ENCODE measurements at regions of chr17 and their contacts with region 1.

Region 1: GRCh38 chr17:45894022-45894784 is at the start of gene MAPT:
- DNase-seq: peak; percentile 91 to 97
- ATAC-seq: peak; percentile 96
- H3K4me3 ChIP-seq: peak within 1 kb of the TSS; percentile 46 to 68
- H3K27ac ChIP-seq: no peak within 1 kb of the TSS
- H3K4me1 ChIP-seq: no peaks in the 10 kb centered on the region
- H3K27me3 ChIP-seq: no peaks in the 10 kb centered on the region
- total RNA-seq, gene MAPT: 1.3 to 3.9 TPM

Region 2: DNA sequence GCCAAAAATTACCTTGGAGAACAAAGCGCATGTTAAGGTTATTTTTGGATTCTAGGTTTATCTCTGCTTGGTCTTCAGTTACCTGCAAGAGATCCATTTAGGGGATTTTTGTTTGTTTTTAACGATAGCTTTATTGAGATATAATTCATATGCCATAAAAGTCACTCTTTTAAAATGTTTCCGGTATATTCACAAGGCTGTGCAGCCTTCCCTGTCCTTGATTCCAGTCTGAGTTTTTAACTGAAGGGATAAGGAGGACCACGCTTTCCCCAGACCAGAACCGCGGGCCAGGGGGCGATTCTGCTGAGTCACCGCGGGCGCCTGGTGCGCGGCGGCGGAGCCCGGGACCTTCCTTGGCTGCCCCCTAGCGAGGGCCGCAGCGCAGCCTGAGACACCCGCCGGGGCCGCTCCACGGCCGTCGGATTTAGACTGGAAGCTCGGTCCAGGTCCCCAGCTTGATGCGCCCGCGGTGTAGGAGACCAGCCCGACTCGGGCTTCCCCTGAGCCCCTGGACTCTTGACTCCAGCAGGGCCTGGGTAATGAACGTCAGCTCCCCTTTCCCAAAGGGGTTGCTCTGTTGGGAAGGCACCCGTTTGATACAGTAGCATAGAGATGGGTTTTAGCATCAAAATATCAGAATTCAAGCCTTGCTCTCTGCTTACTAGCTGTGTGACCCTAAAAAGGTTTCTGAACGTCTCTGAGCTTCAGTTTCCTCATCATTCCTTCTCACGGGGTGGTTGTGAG is 54.9 kb after region 1 on chr17:
- intact Hi-C with region 1: loop called (anchors 10 kb)
- DNase-seq: peak; percentile 84 to 94
- ATAC-seq: peak; percentile 93
- H3K4me3 ChIP-seq: no peak overlapping the region
- H3K27ac ChIP-seq: no peak overlapping the region
- H3K4me1 ChIP-seq: no peaks in the 10 kb centered on the region
- H3K27me3 ChIP-seq: no peaks in the 10 kb centered on the region

Measured in aorta (tissue), 5 donors.